IMR-90 (cell line): ENCODE measurements at regions of chr11 and their contacts with region 1.

Region 1: GRCh38 chr11:124026498-124026897 is at the start of gene OR10G8:
- DNase-seq: no peak
- ATAC-seq: no peak
- H3K4me3 ChIP-seq: no peak within 1 kb of the TSS
- H3K27ac ChIP-seq: no peak within 1 kb of the TSS
- H3K4me1 ChIP-seq: no peaks in the 10 kb centered on the region
- H3K27me3 ChIP-seq: no peaks in the 10 kb centered on the region
- CTCF ChIP-seq: no peak
- POLR2A ChIP-seq: no peak
- RAD21 ChIP-seq: no peak
- total RNA-seq, gene OR10G8: not detected in 2 replicates

Region 2: GRCh38 chr11:123356316-123356938 is 670.1 kb before region 1 on chr11:
- CTCF ChIA-PET with region 1: no interaction called
- POLR2A ChIA-PET with region 1: interaction called, 23 read pairs
- dilution Hi-C with region 1: no loop called
- in situ Hi-C with region 1: no loop called
- intact Hi-C with region 1: no loop called
- DNase-seq: no peak
- ATAC-seq: no peak
- H3K4me3 ChIP-seq: no peak overlapping the region
- H3K27ac ChIP-seq: no peak overlapping the region
- H3K4me1 ChIP-seq: no peaks in the 10 kb centered on the region; the same call in 1 of the 2 replicates
- H3K27me3 ChIP-seq: peaks cover 66% of the 10 kb centered on the region
- CTCF ChIP-seq: no peak
- POLR2A ChIP-seq: no peak
- RAD21 ChIP-seq: no peak

Region 3: GRCh38 chr11:123672568-123672967 is 353.9 kb before region 1 on chr11:
- CTCF ChIA-PET with region 1: no interaction called
- POLR2A ChIA-PET with region 1: no interaction called
- dilution Hi-C with region 1: no loop called
- in situ Hi-C with region 1: no loop called
- intact Hi-C with region 1: no loop called
- DNase-seq: no peak
- ATAC-seq: no peak
- H3K4me3 ChIP-seq: no peak overlapping the region
- H3K27ac ChIP-seq: no peak overlapping the region
- H3K4me1 ChIP-seq: no peaks in the 10 kb centered on the region
- H3K27me3 ChIP-seq: peaks cover 14% of the 10 kb centered on the region
- CTCF ChIP-seq: no peak
- POLR2A ChIP-seq: no peak
- RAD21 ChIP-seq: no peak

Region 4: DNA sequence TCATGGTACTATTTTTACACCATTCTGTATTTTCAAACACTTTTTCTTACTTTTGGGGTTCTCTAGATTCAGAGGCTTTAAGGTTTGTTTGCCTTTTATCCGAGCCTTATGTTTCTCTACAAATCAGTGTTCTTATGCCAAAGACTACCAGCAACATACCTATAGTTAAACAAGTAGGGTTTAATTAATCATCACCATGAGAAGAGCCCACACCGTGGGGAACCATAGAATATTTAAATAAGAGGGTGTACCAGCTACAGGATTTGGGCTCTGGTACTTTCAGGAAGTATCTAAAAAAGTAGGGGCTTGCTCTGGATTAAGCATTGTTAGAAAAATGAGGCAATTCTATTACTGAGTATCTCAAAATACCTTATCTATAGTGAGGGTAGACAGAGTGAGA is 166.8 kb before region 1 on chr11:
- CTCF ChIA-PET with region 1: no interaction called
- POLR2A ChIA-PET with region 1: no interaction called
- dilution Hi-C with region 1: no loop called
- in situ Hi-C with region 1: no loop called
- intact Hi-C with region 1: no loop called
- DNase-seq: no peak
- ATAC-seq: no peak
- H3K4me3 ChIP-seq: no peak overlapping the region
- H3K27ac ChIP-seq: no peak overlapping the region
- H3K4me1 ChIP-seq: no peaks in the 10 kb centered on the region
- H3K27me3 ChIP-seq: no peaks in the 10 kb centered on the region
- CTCF ChIP-seq: no peak
- POLR2A ChIP-seq: no peak
- RAD21 ChIP-seq: no peak